A673 (cell line): ENCODE measurements at regions of chrX and their contacts with region 1.

Region 1: GRCh38 chrX:45801554-45801953 is 600.9 kb upstream of the DIPK2B start:
- DNase-seq: peak; percentile 78
- H3K4me3 ChIP-seq: no peak overlapping the region
- H3K27ac ChIP-seq: no peak overlapping the region
- H3K4me1 ChIP-seq: peaks cover 55% of the 10 kb centered on the region
- H3K27me3 ChIP-seq: no peaks in the 10 kb centered on the region
- CTCF ChIP-seq: peak; percentile 55

Region 2: DNA sequence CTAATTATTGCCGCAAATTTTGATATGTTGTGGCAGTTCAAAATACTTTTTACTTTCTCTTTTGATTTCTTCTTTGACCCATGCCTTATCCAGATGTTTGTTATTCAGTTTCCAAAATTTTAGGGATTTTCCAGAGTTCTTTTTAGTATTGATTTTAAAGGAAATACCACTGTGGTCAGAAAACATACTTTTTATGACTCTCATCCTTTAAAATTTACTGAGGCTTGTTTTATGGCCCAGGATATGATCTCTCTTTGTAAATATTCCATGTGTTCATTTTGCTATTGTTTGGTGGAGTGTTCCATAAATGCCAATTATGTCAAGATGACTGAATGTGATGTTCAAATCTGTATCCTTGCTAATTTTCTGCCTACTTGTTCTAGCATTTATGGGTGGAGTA is 328.6 kb before region 1 on chrX:
- CTCF ChIA-PET with region 1: no interaction called
- POLR2A ChIA-PET with region 1: no interaction called
- intact Hi-C with region 1: no loop called
- DNase-seq: no peak
- H3K4me3 ChIP-seq: no peak overlapping the region
- H3K27ac ChIP-seq: no peak overlapping the region
- H3K4me1 ChIP-seq: no peaks in the 10 kb centered on the region
- H3K27me3 ChIP-seq: no peaks in the 10 kb centered on the region
- CTCF ChIP-seq: no peak

Region 3: DNA sequence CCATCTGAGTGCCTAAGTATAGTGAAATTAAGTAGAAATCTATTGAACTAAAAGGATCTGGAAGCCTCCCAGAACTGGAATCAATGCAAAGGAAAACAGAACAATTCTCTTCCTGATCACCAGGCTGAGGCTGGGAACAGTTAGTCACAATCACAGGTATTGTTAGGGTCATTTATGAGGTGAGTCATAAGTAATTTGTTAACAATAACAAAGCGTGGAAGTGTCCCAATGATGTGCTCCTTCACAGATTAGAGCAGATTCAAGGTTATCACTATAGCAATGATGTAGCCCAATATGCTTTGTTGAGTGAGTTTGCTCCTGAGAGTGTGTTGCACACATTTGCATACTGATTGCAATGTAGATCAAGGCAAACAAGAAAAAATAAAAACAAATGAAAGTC is 515.6 kb after region 1 on chrX:
- CTCF ChIA-PET with region 1: no interaction called
- POLR2A ChIA-PET with region 1: no interaction called
- intact Hi-C with region 1: loop called (anchors 2 kb)
- DNase-seq: peak; percentile 36
- H3K4me3 ChIP-seq: no peak overlapping the region
- H3K27ac ChIP-seq: peak overlapping the region; percentile 92
- H3K4me1 ChIP-seq: peaks cover 51% of the 10 kb centered on the region
- H3K27me3 ChIP-seq: no peaks in the 10 kb centered on the region
- CTCF ChIP-seq: no peak